ENCODE measurements at regions of chr12 and their contacts with region 1.

Region 1: GRCh38 chr12:57520053-57520871 is at the start of gene DDIT3:
- DNase-seq: peak; percentile 95

Region 2: DNA sequence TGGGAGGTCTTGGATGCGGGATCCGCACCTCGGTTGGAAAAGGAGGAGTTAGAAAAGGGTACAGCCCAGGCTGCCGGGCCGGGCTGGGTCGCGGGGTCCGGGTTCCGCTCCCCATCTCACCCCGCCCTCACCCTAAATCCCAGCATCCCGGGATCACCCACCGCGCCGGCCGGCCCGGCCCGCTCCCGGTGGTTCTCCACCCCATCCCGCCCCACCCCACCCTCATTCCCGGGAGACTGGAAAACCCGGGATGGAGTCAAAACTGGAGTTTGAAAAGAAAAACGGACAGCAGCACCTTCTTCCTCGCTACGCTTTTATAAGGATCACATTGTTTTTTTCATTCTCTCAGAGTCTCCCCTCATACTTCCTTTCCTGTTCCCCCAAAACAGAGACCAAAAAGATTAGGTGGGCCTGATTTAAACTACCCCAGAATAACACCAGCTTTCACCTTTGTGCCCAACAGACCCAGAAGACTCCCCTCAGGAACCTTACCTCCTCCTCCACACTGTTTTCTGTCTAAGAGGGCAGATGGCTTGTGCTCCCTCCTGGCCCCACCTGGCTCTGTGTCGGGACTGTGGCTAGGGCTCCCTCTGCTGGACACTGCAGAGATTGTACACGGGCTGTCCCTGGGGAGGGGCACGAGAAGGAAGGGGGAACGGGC is 57.9 kb before region 1 on chr12:
- CTCF ChIA-PET with region 1: interaction called, 3 read pairs
- POLR2A ChIA-PET with region 1: interaction called, 10 read pairs
- DNase-seq: peak; percentile 92

Region 3: GRCh38 chr12:57487597-57488401 is 32.5 kb before region 1 on chr12 and contains the start of gene MARS1:
- CTCF ChIA-PET with region 1: interaction called, 3 read pairs
- POLR2A ChIA-PET with region 1: interaction called, 18 read pairs
- DNase-seq: peak; percentile 88

Region 4: GRCh38 chr12:57498132-57498502 is 22.1 kb before region 1 on chr12:
- CTCF ChIA-PET with region 1: interaction called, 3 read pairs
- POLR2A ChIA-PET with region 1: interaction called, 20 read pairs
- DNase-seq: no peak

Region 5: DNA sequence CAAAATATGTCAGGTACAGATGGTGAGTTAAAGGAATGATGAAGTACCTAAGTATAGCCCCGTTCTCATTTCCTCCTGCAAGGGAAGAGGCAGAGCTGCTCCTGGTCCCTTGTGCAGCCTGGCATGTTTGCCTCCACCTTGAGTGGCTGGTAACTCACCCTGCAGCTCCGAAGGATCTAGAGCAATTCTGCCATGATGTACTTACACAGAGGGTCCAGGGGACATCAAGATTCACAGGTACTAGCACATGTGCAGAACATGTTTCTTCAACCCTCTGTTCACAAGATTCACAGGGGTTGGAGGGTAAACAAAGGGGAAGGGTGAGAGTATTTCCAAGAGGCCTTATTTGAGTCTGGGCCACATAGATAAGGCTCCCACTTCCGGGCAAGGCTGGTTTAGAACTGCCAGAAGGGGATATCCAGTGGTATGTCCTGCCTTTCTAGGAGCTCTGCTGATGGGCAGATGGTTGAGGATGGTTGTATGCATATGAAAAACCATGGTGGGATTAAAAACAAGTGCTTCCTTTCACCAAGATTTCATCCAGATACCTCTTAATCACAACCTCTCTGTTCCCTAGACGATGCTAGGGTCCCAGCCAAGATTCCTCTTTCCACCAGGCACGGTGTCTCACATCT is 19.0 kb after region 1 on chr12:
- CTCF ChIA-PET with region 1: no interaction called
- POLR2A ChIA-PET with region 1: interaction called, 12 read pairs
- DNase-seq: no peak

Region 6: DNA sequence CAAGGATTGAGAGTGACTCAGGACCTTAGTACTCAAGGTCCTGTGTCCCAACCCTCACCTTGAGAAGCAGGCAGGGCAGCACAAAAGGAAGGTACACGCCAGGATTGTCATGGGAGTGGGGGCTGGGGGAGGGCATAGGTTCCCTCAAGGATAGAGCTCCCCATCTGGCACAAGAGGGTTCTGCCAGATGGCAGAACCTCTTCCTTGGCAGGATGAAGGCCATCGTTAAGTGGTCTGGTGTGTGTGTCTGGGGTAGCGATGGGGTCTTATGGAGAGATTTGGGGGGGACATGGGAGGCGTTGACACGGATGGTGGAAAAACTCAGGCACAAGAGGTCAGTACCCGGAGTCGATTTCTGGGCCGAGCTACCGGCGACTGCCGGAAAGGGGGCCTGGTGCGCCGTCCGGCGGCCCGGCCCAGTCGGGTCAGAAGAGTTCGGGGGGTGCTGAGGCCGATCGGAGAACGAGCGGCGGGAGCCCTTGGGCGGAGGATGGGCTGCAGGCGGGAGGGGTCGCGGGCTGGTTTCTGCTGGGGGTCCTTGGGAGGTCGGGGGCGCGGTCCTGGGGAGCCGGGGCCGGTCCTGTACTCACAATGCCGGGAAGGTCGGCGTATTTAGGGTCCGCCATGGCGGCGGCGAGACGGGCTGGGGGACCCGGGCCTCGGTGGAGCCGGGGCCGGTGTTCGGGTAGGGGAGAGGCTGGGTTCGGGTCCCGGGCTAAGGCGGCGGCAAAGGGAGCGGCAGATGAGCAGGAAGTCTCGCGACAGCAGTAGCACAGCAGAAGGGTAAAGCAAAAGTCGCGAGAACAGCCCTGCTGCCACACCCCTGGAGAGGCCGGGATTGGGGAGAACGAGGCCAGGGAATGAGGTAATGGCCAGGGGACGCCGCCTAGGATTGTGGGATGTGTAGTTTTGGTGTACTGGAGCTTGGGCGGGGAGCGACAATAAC is 26.4 kb after region 1 on chr12 and contains the start of gene DCTN2:
- CTCF ChIA-PET with region 1: no interaction called
- POLR2A ChIA-PET with region 1: interaction called, 18 read pairs
- DNase-seq: peak; percentile 99

Region 7: GRCh38 chr12:57632694-57633477 is 112.6 kb after region 1 on chr12 and contains the start of gene B4GALNT1:
- CTCF ChIA-PET with region 1: no interaction called
- POLR2A ChIA-PET with region 1: no interaction called
- DNase-seq: peak; percentile 91

Measured in HEK293T (cell line).